Activated CD4-positive, alpha-beta T cell treated with anti-CD3 and anti-CD28 coated beads for 36 hours (primary cell): ENCODE measurements at regions of chr11 and their contacts with region 1.

Region 1: DNA sequence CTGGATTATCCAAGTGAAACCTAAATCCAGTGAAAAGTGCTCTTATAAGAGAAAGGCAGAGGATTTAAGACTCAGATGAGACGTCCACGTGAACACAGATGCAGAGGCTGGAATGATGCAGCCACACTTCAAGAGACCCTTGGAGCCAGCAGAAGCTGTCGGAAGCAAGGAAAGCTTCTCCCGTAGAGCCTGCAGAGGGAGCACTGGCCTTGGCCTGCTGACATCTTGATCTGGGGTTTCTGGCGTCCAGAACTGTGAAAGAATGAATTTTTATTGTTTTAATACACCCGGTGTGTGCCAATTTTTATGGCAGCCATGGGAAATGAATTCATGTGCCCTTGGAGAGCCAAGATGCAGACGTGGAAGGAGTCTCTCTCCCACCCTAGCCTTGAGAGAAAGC is 407.0 kb upstream of the B3GAT1 start:
- DNase-seq: no peak
- ATAC-seq: no peak
- H3K4me3 Mint-ChIP-seq: no peak overlapping the region
- H3K27ac Mint-ChIP-seq: no peak overlapping the region
- H3K4me1 Mint-ChIP-seq: no peaks in the 10 kb centered on the region
- H3K27me3 Mint-ChIP-seq: peaks cover 27% of the 10 kb centered on the region

Region 2: GRCh38 chr11:134835561-134835960 is 16.5 kb after region 1 on chr11:
- CTCF ChIA-PET with region 1: no interaction called
- POLR2A ChIA-PET with region 1: no interaction called
- intact Hi-C with region 1: no loop called
- DNase-seq: no peak
- ATAC-seq: no peak
- H3K4me3 Mint-ChIP-seq: no peak overlapping the region
- H3K27ac Mint-ChIP-seq: no peak overlapping the region
- H3K4me1 Mint-ChIP-seq: no peaks in the 10 kb centered on the region
- H3K27me3 Mint-ChIP-seq: peaks cover 16% of the 10 kb centered on the region

Region 3: GRCh38 chr11:134882141-134882540 is 63.1 kb after region 1 on chr11:
- CTCF ChIA-PET with region 1: no interaction called
- POLR2A ChIA-PET with region 1: no interaction called
- intact Hi-C with region 1: loop called in 1 of 2 experiments (anchors 2 kb)
- DNase-seq: no peak
- ATAC-seq: no peak
- H3K4me3 Mint-ChIP-seq: no peak overlapping the region
- H3K27ac Mint-ChIP-seq: no peak overlapping the region
- H3K4me1 Mint-ChIP-seq: no peaks in the 10 kb centered on the region
- H3K27me3 Mint-ChIP-seq: peaks cover 13% of the 10 kb centered on the region